Psoas muscle (tissue), 8 donors: ENCODE measurements at regions of chr10 and their contacts with region 1.

Region 1: DNA sequence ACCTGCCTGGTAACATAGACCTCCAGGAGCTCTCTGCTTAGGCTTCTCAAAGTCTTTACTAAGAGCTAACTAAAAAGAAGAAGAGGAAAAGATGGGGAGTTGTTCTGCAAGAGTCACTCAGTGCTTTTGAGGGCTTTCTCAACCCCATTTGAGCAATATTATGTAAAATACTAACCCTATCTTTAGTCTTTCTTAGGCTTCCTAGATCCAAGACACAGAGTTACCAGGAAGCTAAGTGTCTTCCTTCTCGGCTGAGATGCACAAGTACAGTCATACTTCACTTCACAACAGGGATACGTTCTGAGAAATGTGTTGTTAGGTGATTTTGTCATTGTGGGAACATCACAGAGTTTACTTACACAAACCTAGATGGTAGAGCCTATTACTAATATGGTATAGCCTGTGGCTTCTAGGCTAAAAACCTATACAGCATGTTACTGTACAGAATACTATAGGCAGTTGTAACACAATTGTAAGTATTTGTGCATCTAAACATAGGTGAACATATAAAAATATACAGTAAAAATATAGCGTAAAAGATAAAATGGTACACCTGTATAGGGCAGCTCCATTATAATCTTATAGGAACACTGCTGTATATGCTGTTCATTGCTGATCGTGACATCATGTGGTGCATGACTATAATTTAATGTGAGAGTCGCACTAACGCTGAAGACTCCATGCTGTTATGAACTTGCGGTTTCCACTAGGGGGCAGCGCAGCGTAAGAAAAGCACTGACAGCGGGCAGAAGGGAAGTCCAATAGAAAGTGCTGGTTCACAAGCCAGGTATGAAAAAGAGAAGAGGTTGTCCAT is 16.3 kb downstream of the ANKRD22 start:
- DNase-seq: peak; percentile 85 to 90
- ATAC-seq: peak; percentile 78 to 97 (median 90)
- H3K4me3 ChIP-seq: no peak overlapping the region
- H3K27ac ChIP-seq: no peak overlapping the region
- H3K4me1 ChIP-seq: no peaks in the 10 kb centered on the region
- H3K27me3 ChIP-seq: peaks cover 0 to 5% (median 0%) of the 10 kb centered on the region in 3 donors
- CTCF ChIP-seq: peak; percentile 87

Region 2: DNA sequence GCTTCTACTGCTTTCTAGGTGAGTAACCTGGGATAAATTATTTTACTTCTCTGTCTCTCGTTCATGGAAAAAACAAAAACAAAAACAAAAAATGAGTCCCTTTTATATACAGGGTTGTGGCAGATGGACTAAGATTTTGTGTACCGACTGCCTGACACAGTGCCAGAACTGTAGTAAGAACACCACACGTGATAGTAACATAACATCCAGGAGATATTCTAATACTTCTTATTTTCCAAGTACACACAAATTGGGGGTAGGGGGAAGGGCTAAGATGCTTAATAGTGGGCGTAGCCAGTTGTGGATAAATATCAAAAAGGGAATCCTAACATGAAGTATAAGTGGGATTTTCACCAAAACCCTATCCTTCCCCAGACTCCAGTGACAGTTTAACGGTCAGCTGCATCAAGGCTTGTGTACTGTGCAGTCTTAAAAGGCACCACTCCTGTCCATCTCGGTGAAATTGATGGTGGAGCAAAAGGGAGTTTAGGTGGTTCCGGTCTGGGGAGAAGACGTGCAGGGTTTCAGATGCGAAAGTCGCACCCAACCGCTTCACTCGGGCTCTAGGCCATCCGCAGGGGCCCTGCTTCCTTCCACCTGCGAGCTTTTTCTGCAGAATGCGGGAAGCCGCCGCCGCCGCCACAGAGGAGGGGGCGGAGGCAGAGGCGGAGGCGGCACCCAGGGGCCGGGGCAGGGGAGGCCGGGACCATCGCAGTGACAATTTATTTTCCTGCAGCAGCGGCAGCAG is 44.4 kb after region 1 on chr10 and contains the start of gene STAMBPL1:
- intact Hi-C with region 1: loop called in 1 of 2 experiments (anchors 5 kb)
- DNase-seq: peak; percentile 58 to 72
- ATAC-seq: peak; percentile 31 to 61 (median 42)
- H3K4me3 ChIP-seq: peak within 1 kb of the TSS; percentile 73
- H3K27ac ChIP-seq: peak within 1 kb of the TSS; percentile 75
- H3K4me1 ChIP-seq: peaks cover 7% of the 10 kb centered on the region
- H3K27me3 ChIP-seq: peaks cover 0 to 39% (median 0%) of the 10 kb centered on the region in 3 donors
- CTCF ChIP-seq: no peak
- total RNA-seq, gene STAMBPL1: 0.90 to 1.4 (median 1.0) TPM

Region 3: DNA sequence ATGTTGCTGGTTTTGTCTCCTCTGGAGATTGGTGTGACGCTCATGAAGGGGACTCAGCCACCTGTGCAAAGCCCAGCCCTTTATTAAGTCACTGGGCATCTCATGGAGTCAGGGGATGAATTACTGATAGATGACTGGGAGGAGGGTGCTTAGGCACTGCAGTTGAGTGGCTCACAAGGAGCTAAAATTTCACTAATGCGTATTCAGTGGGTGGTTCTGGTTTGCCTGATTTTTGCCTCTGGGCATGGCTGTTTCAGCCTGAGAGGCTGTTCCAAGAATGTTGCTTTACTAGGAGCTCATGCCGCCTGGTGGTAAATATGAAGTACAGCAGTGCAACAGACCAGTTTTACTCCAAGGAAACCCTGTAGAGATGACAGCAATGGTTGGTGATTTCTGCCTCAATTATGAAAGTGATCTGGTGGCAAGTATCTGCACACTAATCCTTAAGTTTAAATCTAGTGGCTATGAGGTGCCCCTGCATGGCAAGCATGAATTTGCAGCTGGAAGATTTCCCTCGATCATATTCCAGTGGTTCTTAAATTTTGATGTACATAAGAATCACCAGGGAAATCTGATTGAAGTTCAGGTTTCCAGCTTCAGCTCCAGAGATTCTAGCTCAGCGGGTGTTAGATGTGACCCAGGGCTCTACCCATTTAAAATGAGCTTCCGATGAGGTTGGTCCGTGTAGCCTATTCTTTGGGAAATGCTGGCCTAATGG is 97.4 kb after region 1 on chr10:
- intact Hi-C with region 1: loop called (anchors 1 to 5 kb)
- DNase-seq: peak; percentile 24 to 54
- ATAC-seq: peak; percentile 68 to 83 (median 78)
- H3K4me3 ChIP-seq: no peak overlapping the region
- H3K27ac ChIP-seq: no peak overlapping the region
- H3K4me1 ChIP-seq: peaks cover 3% of the 10 kb centered on the region
- H3K27me3 ChIP-seq: no peaks in the 10 kb centered on the region
- CTCF ChIP-seq: peak; percentile 79

Region 4: DNA sequence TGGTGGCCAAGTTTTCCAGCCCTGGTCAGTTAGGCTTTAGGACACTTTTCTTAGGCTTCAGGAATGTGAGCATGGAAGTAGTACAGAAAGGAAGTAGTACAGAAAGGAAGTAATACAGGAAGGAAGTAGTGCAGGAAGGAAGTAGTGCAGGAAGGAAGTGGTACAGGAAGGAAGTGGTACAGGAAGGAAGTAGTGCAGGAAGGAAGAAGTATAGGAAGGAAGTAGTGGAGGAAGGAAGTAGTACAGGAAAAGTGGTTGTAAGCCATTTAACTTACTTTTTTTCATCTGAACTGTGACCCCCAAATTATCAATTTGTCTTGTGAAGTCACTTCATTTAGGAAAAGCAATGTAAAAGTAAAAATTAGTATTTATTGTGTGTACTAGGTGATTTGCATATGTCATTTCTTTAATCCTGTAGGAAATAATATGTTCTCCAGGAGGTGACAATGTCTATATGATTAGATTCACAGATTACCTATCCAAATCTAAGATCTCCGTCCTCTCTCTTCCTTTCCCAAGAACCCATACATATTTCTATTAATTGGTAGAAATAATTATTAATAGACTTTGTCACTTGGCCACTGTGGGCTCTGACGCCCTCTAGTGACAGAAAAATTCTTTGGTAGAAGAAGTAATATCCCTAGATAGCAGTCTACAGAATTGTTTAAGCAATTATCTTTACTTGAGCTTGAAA is 151.4 kb after region 1 on chr10:
- intact Hi-C with region 1: loop called in 1 of 2 experiments (anchors 5 kb)
- DNase-seq: no peak
- ATAC-seq: no peak
- H3K4me3 ChIP-seq: no peak overlapping the region
- H3K27ac ChIP-seq: no peak overlapping the region
- H3K4me1 ChIP-seq: no peaks in the 10 kb centered on the region
- H3K27me3 ChIP-seq: no peaks in the 10 kb centered on the region
- CTCF ChIP-seq: peak; percentile 76